ENCODE measurements at regions of chr6 and their contacts with region 1.

Region 1: DNA sequence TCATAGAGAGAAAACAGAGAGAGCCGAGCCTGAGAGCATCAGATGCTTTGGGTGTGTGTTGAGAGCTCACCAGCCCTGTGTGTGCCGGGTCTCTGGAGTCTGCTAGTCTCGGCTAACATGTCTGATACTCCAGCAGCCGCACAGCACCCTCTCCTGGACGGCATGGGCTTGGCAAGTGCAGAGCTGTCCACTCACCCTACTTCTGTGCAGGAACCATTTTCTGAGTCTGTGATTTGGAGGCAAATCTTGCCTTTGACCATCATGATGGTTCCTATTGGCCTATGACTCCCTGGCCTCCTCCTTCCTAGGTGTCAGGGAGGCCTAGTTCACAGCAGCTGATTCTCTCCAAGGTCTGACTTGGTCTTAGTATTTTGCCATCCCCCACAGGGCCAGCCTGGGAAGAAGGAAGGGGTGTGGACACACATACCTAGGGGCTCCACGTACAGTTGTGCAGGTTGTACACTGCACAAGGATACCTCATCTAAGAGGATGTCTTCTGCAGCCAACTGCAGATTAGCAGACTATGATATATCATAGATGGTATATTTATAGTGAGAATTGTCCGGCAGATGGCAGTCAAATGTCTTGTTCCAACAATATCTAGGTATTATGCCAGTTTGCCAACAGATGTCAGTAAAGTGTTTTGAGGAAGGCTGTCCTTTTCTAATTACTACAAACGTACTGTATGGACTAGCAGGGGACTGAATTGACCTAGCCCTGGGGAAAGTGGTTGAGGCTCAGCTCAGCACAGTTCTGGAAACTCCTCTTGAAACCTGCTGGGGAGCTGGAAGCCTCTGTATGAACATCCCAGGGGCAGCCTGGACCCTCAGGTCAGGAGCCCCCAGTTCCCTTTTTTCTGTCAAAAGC is 13.0 kb downstream of the FGD2 start:
- DNase-seq: peak; percentile 42
- H3K4me3 ChIP-seq: no peak overlapping the region
- CTCF ChIP-seq: peak; percentile 96

Region 2: DNA sequence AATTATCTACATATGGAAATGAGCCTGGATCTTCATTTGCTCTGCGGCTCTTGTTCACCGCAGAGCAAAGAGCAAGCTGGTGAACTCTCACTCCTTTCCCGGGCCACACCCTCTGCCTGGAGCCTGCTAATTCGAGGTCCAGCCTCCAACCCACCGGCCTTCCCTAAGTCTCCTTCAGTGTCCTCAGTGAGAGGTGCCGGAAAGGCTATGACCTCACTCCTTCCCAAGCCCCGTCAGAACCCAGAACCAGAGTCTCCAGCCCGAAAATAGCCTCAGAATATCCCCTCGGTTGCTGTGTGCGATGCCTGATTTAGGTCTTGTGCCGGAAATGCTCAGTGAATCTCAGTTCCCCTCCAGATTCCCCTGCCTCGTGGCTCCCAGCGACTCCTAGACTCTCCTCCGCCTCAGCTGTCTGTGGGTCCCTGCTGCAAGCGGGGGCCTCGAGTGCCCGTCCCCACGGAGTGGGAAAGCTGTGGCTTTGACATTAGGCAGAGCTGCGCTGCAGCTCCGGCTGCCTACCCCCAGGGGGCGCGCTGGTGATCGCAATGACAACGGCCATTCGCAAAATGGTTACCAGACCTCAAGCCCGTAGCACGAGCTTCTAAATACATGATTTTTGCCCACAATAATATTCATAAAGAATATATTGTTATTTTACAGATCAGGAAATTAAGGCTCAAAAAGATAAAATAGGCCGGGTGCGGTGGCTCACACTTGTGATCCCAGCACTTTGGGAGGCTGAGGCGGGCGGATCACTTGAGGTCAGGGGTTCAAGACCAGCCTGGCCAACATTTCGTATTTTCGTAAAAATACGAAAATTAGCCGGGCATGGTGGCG is 677.6 kb before region 1 on chr6:
- CTCF ChIA-PET with region 1: no interaction called
- POLR2A ChIA-PET with region 1: no interaction called
- DNase-seq: no peak
- H3K4me3 ChIP-seq: peak overlapping the region; percentile 6
- CTCF ChIP-seq: peak; percentile 97

Region 3: GRCh38 chr6:36445621-36446020 is 572.8 kb before region 1 on chr6:
- CTCF ChIA-PET with region 1: no interaction called
- POLR2A ChIA-PET with region 1: no interaction called
- DNase-seq: no peak
- H3K4me3 ChIP-seq: no peak overlapping the region
- CTCF ChIP-seq: no peak

Region 4: GRCh38 chr6:36692220-36692619 is 326.2 kb before region 1 on chr6:
- CTCF ChIA-PET with region 1: no interaction called
- POLR2A ChIA-PET with region 1: no interaction called
- DNase-seq: no peak
- H3K4me3 ChIP-seq: no peak overlapping the region
- CTCF ChIP-seq: no peak

Region 5: GRCh38 chr6:36765594-36766398 is 252.6 kb before region 1 on chr6:
- CTCF ChIA-PET with region 1: interaction called, 521 read pairs
- POLR2A ChIA-PET with region 1: no interaction called
- DNase-seq: no peak
- H3K4me3 ChIP-seq: peak overlapping the region; percentile 20; the same call in 1 of the 2 replicates
- CTCF ChIP-seq: peak; percentile 97

Region 6: GRCh38 chr6:36827261-36828079 is 191.0 kb before region 1 on chr6:
- CTCF ChIA-PET with region 1: no interaction called
- POLR2A ChIA-PET with region 1: no interaction called
- DNase-seq: no peak
- H3K4me3 ChIP-seq: no peak overlapping the region
- CTCF ChIP-seq: no peak

Region 7: DNA sequence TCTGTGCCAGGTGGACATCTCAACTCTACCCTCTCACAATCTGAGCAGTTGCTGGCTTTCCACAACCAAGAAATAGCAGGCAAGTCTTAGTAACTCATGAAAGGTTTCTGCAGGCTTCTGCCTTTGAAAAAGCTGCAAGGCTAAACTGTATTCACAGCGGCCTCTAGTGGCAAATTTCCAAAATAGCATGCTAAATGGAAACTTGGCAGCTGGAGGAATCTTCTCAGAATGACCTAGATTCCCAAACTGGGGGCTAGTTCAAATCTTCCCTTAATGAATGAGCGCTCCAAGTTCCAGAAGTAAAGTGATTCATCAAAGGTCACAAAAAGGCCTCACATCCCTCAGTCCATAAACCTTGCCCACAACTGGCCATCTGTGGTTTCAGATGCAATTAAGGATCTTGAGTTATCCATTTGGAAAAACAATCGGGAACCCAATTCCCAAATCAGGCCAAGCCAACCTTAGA is 167.2 kb before region 1 on chr6:
- CTCF ChIA-PET with region 1: interaction called, 26 read pairs
- POLR2A ChIA-PET with region 1: no interaction called
- DNase-seq: peak; percentile 14
- H3K4me3 ChIP-seq: no peak overlapping the region
- CTCF ChIP-seq: peak; percentile 67

Region 8: GRCh38 chr6:36912586-36912985 is 105.8 kb before region 1 on chr6:
- CTCF ChIA-PET with region 1: interaction called, 19 read pairs
- POLR2A ChIA-PET with region 1: no interaction called
- DNase-seq: peak; percentile 74
- H3K4me3 ChIP-seq: no peak overlapping the region
- CTCF ChIP-seq: no peak

Region 9: DNA sequence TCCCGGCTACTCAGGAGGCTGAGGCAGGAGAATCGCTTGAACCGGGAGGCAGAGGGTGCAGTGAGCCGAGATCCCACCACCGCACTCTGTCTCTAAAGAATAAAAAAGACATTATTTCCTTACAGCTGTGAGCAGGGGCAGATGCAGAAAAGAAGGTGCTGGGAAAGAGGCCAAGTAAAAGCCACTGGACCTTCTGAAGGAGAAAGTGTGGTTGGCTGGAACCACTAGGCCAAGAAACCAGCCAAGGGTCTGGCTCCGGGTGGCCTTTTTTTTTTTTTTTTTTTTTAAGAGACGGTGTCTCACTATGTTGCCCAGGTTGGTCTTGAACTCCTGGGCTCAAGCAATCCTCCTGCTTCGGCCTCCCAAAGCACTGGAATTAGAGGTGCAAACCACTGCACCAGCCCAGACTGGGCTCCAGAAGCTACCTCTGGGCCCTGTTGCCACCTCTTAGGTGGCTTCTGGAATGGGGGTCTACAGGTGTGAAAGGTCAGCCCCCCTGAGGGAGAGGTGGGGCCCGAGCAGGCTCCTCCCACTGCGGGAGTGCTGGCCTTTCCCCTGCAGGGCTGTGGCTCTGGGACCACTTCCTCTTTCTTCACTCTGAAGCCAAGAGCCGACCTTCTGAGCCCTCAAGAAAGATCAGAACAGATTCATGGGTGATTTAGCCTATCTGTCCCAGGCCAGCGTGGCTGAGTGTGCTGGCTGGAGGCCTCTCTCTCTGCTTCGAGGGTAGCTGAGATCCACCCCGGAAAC is 13.2 kb before region 1 on chr6 and contains the start of gene FGD2:
- CTCF ChIA-PET with region 1: interaction called, 55 read pairs
- POLR2A ChIA-PET with region 1: no interaction called
- DNase-seq: no peak
- H3K4me3 ChIP-seq: no peak within 1 kb of the TSS
- CTCF ChIP-seq: no peak

Region 10: GRCh38 chr6:37059344-37060206 is 41.1 kb after region 1 on chr6:
- CTCF ChIA-PET with region 1: interaction called, 46 read pairs
- POLR2A ChIA-PET with region 1: no interaction called
- DNase-seq: peak; percentile 80
- H3K4me3 ChIP-seq: peak overlapping the region; percentile 36
- CTCF ChIP-seq: peak; percentile 77

Region 11: DNA sequence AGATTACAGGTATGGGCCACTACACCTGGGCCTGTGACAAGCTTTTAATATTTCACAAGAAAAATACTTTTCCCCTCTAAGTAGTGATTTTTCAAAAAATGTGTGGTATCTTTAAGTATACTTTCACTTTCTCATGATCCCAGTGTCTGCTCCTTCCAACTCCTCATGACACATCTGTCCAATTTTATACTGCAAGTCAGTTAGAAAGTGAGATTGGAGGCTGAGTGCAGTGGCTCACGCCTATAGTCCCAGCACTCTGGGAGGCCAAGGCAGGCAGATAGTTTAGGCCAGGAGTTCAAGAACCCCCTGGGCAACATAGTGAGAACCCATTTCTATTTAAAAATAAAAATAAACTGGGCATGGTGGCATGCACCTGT is 171.7 kb after region 1 on chr6:
- CTCF ChIA-PET with region 1: interaction called, 1,706 read pairs
- POLR2A ChIA-PET with region 1: no interaction called
- DNase-seq: no peak
- H3K4me3 ChIP-seq: no peak overlapping the region
- CTCF ChIP-seq: no peak

Measured in AG04449 (cell line).